ENCODE measurements at regions of chr9 and their contacts with region 1.

Region 1: GRCh38 chr9:8857926-8858595 is 1058.5 kb upstream of the DMAC1 start:
- DNase-seq: peak; percentile 55 to 76
- ATAC-seq: peak; percentile 77 to 90 (median 86)
- H3K4me3 ChIP-seq: peak overlapping the region; percentile 47 to 77 (median 68)
- H3K27ac ChIP-seq: peak overlapping the region in 6 of 10 donors; percentile 36 to 68 (median 56)
- H3K4me1 ChIP-seq: peaks cover 0 to 39% (median 8%) of the 10 kb centered on the region in 9 donors
- H3K27me3 ChIP-seq: peaks cover 0 to 51% (median 8%) of the 10 kb centered on the region in 7 donors
- CTCF ChIP-seq: no peak

Region 2: GRCh38 chr9:8486095-8486494 is 372.0 kb before region 1 on chr9:
- intact Hi-C with region 1: loop called in 2 of 10 experiments (anchors 10 kb)
- DNase-seq: peak in 1 of 2 donors; percentile 25
- ATAC-seq: peak; percentile 67 to 81 (median 78)
- H3K4me3 ChIP-seq: no peak overlapping the region
- H3K27ac ChIP-seq: no peak overlapping the region
- H3K4me1 ChIP-seq: no peaks in the 10 kb centered on the region
- H3K27me3 ChIP-seq: no peaks in the 10 kb centered on the region
- CTCF ChIP-seq: peak; percentile 5 to 58 (median 48)

Region 3: DNA sequence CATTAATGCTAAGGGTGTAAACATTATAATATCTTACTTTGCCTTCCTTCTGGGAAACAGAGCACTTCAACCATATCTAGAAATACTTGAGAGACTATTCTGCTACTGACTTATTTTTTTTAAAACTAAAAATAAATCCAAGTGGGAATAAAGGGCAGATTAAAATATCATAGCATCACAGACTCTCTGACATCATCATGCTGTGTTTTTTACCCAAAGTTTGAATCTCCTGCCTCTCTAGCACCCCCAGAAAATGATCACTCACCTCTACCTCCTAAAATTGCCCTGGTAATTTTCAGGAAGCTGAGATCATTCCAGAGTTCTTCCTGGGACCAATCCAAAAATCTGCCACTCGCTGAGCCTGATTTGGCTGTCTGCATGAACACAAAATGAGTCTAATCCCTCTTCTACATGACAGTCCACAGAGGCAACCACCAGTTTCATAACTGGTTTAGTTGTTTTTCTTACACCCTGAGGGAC is 244.7 kb before region 1 on chr9:
- intact Hi-C with region 1: loop called in 1 of 10 experiments (anchors 10 kb)
- DNase-seq: peak in 1 of 2 donors; percentile 32
- ATAC-seq: peak; percentile 47 to 89 (median 76)
- H3K4me3 ChIP-seq: no peak overlapping the region
- H3K27ac ChIP-seq: peak overlapping the region in 6 of 10 donors; percentile 7 to 64 (median 26)
- H3K4me1 ChIP-seq: peaks cover 0 to 21% (median 14%) of the 10 kb centered on the region in 9 donors
- H3K27me3 ChIP-seq: no peaks in the 10 kb centered on the region
- CTCF ChIP-seq: no peak

Region 4: GRCh38 chr9:9469271-9469670 is 611.2 kb after region 1 on chr9:
- intact Hi-C with region 1: no loop called
- DNase-seq: no peak
- ATAC-seq: no peak
- H3K4me3 ChIP-seq: no peak overlapping the region
- H3K27ac ChIP-seq: no peak overlapping the region
- H3K4me1 ChIP-seq: no peaks in the 10 kb centered on the region
- H3K27me3 ChIP-seq: no peaks in the 10 kb centered on the region
- CTCF ChIP-seq: no peak

Measured in heart right ventricle (tissue), 16 donors.